Lower leg skin (tissue), 4 donors: ENCODE measurements at regions of chr18 and their contacts with region 1.

Region 1: GRCh38 chr18:78021196-78021595 is 771.5 kb downstream of the GALR1 start:
- DNase-seq: no peak
- H3K4me3 ChIP-seq: no peak overlapping the region
- CTCF ChIP-seq: no peak
- POLR2A ChIP-seq: no peak

Region 2: GRCh38 chr18:78082816-78083215 is 61.6 kb after region 1 on chr18:
- intact Hi-C with region 1: loop called (anchors 10 kb)
- DNase-seq: no peak
- H3K4me3 ChIP-seq: no peak overlapping the region
- CTCF ChIP-seq: no peak
- POLR2A ChIP-seq: no peak

Region 3: DNA sequence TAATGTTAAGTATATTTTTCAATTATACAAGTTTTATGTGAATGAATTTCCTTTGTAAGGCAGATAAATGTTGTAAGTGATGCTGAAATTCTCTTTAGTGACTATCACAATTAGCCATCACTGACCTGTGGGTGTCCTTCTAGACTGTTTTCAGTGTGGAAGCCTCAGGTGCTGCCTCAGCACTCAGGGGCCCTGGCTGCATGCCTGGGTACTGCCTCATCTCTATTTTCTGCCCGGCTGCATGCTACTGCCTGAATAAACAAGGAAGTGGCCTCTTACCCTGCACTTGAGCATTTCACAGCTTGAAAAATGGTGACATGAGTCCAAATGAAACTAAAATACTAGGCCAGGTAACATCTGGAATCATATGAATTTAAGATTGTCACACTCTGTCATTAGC is 170.9 kb after region 1 on chr18:
- intact Hi-C with region 1: no loop called
- DNase-seq: no peak
- H3K4me3 ChIP-seq: no peak overlapping the region
- CTCF ChIP-seq: no peak
- POLR2A ChIP-seq: no peak